H1 (cell line): ENCODE measurements at regions of chr10 and their contacts with region 1.

Region 1: GRCh38 chr10:30359373-30360206 is 10.5 kb upstream of the MTPAP start:
- DNase-seq: peak; percentile 71 to 92
- H3K4me3 ChIP-seq: 0 out of 8 replicates have a peak overlapping the region, but pooled peaks of 1 of the 4 experiments have one; percentile 5
- H3K27ac ChIP-seq: no peak overlapping the region
- H3K4me1 ChIP-seq: peaks cover 0 to 2% (median 0%) of the 10 kb centered on the region in 4 experiments; a peak in 4 of 7 replicates
- H3K27me3 ChIP-seq: no peaks in the 10 kb centered on the region
- CTCF ChIP-seq: peak; percentile 80 to 84 (median 84)
- EP300 ChIP-seq: no peak
- POLR2A ChIP-seq: no peak
- RAD21 ChIP-seq: peak; percentile 27 to 40

Region 2: DNA sequence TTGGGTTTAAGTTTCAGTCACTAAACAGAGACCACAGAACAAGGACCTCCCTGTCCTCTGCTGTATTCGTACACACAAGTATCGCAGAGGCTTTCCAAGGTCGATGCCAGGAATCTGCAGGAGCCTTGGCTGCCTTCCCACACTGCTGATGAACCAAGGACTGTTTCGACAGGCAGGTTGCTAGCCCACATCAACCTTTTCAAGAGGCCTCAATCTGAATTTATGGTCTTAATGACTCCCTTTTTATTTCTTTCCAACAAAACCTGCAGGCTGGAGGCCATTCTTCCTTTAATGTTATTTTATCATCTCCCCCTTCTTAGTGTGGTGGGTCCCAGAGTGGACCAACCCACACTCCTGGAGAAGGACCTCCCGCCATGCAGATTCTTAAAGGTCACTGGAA is 345.8 kb before region 1 on chr10:
- CTCF ChIA-PET with region 1: no interaction called
- POLR2A ChIA-PET with region 1: no interaction called
- DNase-seq: no peak
- H3K4me3 ChIP-seq: no peak overlapping the region
- H3K27ac ChIP-seq: no peak overlapping the region
- H3K4me1 ChIP-seq: no peaks in the 10 kb centered on the region; a peak in 1 of 7 replicates
- H3K27me3 ChIP-seq: no peaks in the 10 kb centered on the region
- CTCF ChIP-seq: no peak
- EP300 ChIP-seq: no peak
- POLR2A ChIP-seq: no peak
- RAD21 ChIP-seq: no peak

Region 3: GRCh38 chr10:30294479-30295240 is 64.9 kb before region 1 on chr10:
- CTCF ChIA-PET with region 1: no interaction called
- POLR2A ChIA-PET with region 1: no interaction called
- DNase-seq: no peak
- H3K4me3 ChIP-seq: no peak overlapping the region
- H3K27ac ChIP-seq: no peak overlapping the region
- H3K4me1 ChIP-seq: no peaks in the 10 kb centered on the region
- H3K27me3 ChIP-seq: no peaks in the 10 kb centered on the region
- CTCF ChIP-seq: no peak
- EP300 ChIP-seq: no peak
- POLR2A ChIP-seq: no peak
- RAD21 ChIP-seq: no peak

Region 4: GRCh38 chr10:30348378-30348776 is 11.2 kb before region 1 on chr10:
- CTCF ChIA-PET with region 1: interaction called, 29 read pairs
- POLR2A ChIA-PET with region 1: interaction called, 12 read pairs
- DNase-seq: no peak
- H3K4me3 ChIP-seq: peak overlapping the region; percentile 88 to 100 (median 98)
- H3K27ac ChIP-seq: peak overlapping the region; percentile 93
- H3K4me1 ChIP-seq: peaks cover 0 to 3% (median 0%) of the 10 kb centered on the region in 4 experiments; a peak in 1 of 7 replicates
- H3K27me3 ChIP-seq: no peaks in the 10 kb centered on the region
- CTCF ChIP-seq: no peak
- EP300 ChIP-seq: no peak
- POLR2A ChIP-seq: no peak
- RAD21 ChIP-seq: no peak

Region 5: GRCh38 chr10:30384701-30385201 is 25.2 kb after region 1 on chr10:
- CTCF ChIA-PET with region 1: interaction called, 47 read pairs
- POLR2A ChIA-PET with region 1: interaction called, 3 read pairs
- DNase-seq: no peak
- H3K4me3 ChIP-seq: no peak overlapping the region
- H3K27ac ChIP-seq: no peak overlapping the region
- H3K4me1 ChIP-seq: no peaks in the 10 kb centered on the region
- H3K27me3 ChIP-seq: no peaks in the 10 kb centered on the region
- CTCF ChIP-seq: peak; percentile 66 to 78 (median 71)
- EP300 ChIP-seq: no peak
- POLR2A ChIP-seq: no peak
- RAD21 ChIP-seq: peak; percentile 60 to 65

Region 6: GRCh38 chr10:30392564-30392990 is 33.0 kb after region 1 on chr10:
- CTCF ChIA-PET with region 1: interaction called, 24 read pairs
- POLR2A ChIA-PET with region 1: no interaction called
- DNase-seq: peak; percentile 47 to 93
- H3K4me3 ChIP-seq: no peak overlapping the region
- H3K27ac ChIP-seq: no peak overlapping the region
- H3K4me1 ChIP-seq: peaks cover 0 to 2% (median 0%) of the 10 kb centered on the region in 4 experiments; a peak in 2 of 7 replicates
- H3K27me3 ChIP-seq: no peaks in the 10 kb centered on the region
- CTCF ChIP-seq: peak; percentile 93 to 98 (median 93)
- EP300 ChIP-seq: no peak
- POLR2A ChIP-seq: no peak
- RAD21 ChIP-seq: peak; percentile 97 to 98